Calu3 (cell line): ENCODE measurements at regions of chr16 and their contacts with region 1.

Region 1: DNA sequence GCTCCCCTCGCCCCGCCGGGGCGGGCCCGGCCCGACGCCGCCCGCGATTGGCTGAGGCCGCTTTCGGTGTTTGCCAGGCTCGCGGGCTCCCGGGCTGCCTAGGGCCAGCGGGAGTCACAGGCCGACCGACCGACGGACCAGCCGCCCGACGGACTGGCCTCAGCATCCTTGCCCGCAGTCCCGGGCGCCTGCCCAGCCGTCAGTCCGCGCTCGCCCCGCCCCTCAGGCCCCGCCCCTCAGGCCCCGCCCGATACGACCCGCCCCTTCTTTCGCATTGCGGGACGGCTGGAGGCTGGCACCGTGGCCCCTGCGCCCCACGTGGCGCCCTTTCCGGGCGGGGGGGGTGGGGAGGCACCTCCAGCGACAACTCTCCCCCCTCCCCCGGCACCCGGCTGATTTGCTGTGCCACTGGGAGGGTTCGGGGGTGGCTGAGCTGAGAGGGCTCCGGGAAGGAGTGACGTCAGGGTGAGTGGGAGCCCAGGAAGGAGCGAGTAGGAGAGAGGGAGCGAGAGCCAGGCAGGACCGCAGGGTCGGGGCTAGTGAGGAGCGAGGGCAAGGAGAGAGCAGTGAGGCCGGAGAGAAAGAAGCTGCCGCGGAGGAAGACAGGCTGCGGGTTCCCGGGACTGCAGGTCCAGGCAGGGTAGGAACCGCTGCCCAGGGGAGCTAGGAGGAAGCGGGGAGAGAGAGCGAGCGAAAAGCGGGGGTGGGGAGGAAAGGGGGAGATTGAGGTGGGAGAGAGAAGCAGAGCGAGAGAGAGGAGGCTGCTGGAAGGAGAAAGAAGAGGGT is at the start of gene ASPHD1:
- DNase-seq: peak; percentile 95
- H3K4me3 Mint-ChIP-seq: peak within 1 kb of the TSS; percentile 89
- H3K27ac Mint-ChIP-seq: peak within 1 kb of the TSS; percentile 95
- H3K4me1 Mint-ChIP-seq: peaks cover 24% of the 10 kb centered on the region
- H3K27me3 Mint-ChIP-seq: no peaks in the 10 kb centered on the region
- CTCF ChIP-seq: no peak
- total RNA-seq, gene ASPHD1: 54.1 and 64.1 TPM in 2 replicates

Region 2: DNA sequence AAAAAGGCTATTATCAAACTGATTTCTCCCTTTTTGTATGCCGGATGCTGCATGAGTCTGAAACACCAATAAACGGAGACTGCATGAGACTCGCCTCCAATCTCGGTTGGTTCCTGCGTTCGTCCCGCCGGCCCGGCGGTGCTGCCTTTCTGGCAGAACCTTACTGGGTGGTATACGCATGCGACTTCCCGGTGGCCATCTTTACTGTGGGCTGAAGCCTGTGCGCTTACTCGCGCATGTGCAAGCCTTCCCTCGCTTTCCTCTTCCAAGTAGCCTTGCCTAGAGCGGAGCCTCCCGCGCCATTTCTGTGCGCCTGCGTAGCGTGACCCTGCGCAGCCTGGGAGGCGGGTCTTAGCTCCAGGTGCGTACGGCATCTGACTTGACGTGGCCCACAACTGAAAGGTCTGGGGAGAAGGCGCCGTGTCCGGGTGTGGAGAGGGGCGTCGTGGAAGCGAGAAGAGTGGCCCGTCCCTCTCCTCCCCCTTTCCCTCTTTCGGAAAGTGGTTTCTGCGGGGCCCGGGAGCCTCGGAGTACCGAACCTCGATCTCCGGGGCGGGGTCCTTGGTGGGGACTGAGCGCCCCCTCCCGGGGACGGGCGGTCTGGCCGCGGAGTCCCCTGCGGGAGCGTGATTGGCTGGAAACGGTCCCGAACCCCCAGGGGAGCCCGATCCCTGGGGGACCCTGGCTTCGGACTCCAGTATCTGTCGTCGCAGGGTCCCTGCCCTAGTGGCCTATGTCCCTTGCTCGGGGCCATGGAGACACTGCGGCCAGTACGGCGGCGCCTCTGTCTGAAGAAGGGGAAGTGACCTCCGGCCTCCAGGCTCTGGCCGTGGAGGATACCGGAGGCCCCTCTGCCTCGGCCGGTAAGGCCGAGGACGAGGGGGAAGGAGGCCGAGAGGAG is 84.3 kb before region 1 on chr16 and contains the start of gene PAGR1:
- CTCF ChIA-PET with region 1: interaction called, 4 read pairs
- intact Hi-C with region 1: loop called (anchors 10 kb)
- DNase-seq: peak; percentile 98
- H3K4me3 Mint-ChIP-seq: peak within 1 kb of the TSS; percentile 96
- H3K27ac Mint-ChIP-seq: peak within 1 kb of the TSS; percentile 94
- H3K4me1 Mint-ChIP-seq: peaks cover 42% of the 10 kb centered on the region
- H3K27me3 Mint-ChIP-seq: peaks cover 39% of the 10 kb centered on the region
- CTCF ChIP-seq: peak; percentile 94
- total RNA-seq, gene PAGR1: 30.4 and 32.0 TPM in 2 replicates

Region 3: GRCh38 chr16:29862884-29863668 is 37.2 kb before region 1 on chr16 and contains the start of gene CDIPT:
- CTCF ChIA-PET with region 1: interaction called, 4 read pairs
- intact Hi-C with region 1: loop called (anchors 5 kb)
- DNase-seq: peak; percentile 95
- H3K4me3 Mint-ChIP-seq: peak within 1 kb of the TSS; percentile 89
- H3K27ac Mint-ChIP-seq: peak within 1 kb of the TSS; percentile 99
- H3K4me1 Mint-ChIP-seq: peaks cover 7% of the 10 kb centered on the region
- H3K27me3 Mint-ChIP-seq: peaks cover 9% of the 10 kb centered on the region
- CTCF ChIP-seq: peak; percentile 23
- total RNA-seq, gene CDIPT: 62.7 and 64.1 TPM in 2 replicates

Region 4: DNA sequence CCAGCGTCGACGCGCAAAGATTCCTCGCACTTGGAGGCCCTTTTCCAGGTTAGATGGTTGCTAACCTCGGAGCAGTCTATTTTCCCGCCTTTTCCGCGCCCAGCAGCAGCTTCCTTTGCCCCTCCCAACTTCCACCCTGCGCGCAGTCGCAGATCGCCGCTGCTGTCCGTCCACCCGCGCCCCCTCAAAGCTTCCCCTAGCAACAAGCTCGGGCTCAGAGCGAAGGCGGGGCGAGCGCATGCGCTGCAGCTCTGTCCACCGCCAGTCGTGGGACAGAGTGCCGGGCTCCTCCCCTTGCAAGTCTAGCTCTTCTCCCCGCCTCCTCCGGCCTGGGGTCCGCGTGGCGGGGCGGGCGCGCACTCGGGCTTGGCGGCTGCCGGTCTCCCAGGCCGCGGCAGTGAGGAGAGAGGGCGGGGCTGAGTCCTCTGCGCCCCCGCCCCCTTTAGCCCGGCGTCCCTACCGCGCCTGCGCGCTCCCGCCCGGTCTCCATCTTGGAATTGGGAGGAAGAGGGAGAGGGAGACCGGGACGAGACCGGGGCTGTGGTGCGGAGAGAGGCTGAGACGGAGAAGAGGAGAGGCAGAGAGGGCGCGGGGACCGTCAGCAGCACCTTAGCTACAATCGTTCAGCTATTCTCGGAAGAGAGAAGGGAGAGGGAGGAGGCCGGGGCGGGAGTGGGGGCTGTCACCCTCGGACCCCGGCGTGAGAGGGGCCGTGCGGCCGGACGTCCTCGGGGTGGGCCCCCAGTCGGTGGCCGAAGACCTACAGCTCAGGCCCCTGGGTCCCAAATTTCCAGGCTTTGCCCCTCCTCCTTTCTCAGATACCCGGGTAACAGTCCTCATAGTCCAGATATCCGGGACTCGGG is 73.3 kb after region 1 on chr16 and contains the start of gene TAOK2:
- CTCF ChIA-PET with region 1: interaction called, 10 read pairs
- intact Hi-C with region 1: no loop called
- DNase-seq: peak; percentile 99
- H3K4me3 Mint-ChIP-seq: peak within 1 kb of the TSS; percentile 85
- H3K27ac Mint-ChIP-seq: peak within 1 kb of the TSS; percentile 89
- H3K4me1 Mint-ChIP-seq: peaks cover 26% of the 10 kb centered on the region
- H3K27me3 Mint-ChIP-seq: no peaks in the 10 kb centered on the region
- CTCF ChIP-seq: no peak
- total RNA-seq, gene TAOK2: 75.9 and 76.2 TPM in 2 replicates

Region 5: GRCh38 chr16:30032083-30032819 is 132.0 kb after region 1 on chr16:
- CTCF ChIA-PET with region 1: interaction called, 10 read pairs
- intact Hi-C with region 1: no loop called
- DNase-seq: peak; percentile 74
- H3K4me3 Mint-ChIP-seq: peak overlapping the region; percentile 18
- H3K27ac Mint-ChIP-seq: no peak overlapping the region
- H3K4me1 Mint-ChIP-seq: peaks cover 9% of the 10 kb centered on the region
- H3K27me3 Mint-ChIP-seq: peaks cover 86% of the 10 kb centered on the region
- CTCF ChIP-seq: peak; percentile 93